Panc1 (cell line): ENCODE measurements at regions of chr1 and their contacts with region 1.

Region 1: GRCh38 chr1:45173632-45174031 is 32.8 kb downstream of the ZSWIM5 start:
- DNase-seq: no peak
- ATAC-seq: no peak
- H3K4me3 ChIP-seq: no peak overlapping the region
- H3K27ac ChIP-seq: no peak overlapping the region
- H3K4me1 ChIP-seq: peaks cover 14% of the 10 kb centered on the region
- H3K27me3 ChIP-seq: no peaks in the 10 kb centered on the region
- CTCF ChIP-seq: no peak

Region 2: GRCh38 chr1:45093334-45093733 is 80.3 kb before region 1 on chr1:
- CTCF ChIA-PET with region 1: no interaction called
- POLR2A ChIA-PET with region 1: no interaction called
- in situ Hi-C with region 1: no loop called
- intact Hi-C with region 1: no loop called
- DNase-seq: no peak
- ATAC-seq: no peak
- H3K4me3 ChIP-seq: no peak overlapping the region
- H3K27ac ChIP-seq: no peak overlapping the region
- H3K4me1 ChIP-seq: no peaks in the 10 kb centered on the region
- H3K27me3 ChIP-seq: no peaks in the 10 kb centered on the region
- CTCF ChIP-seq: no peak

Region 3: GRCh38 chr1:45216200-45216541 is 42.5 kb after region 1 on chr1:
- CTCF ChIA-PET with region 1: no interaction called
- POLR2A ChIA-PET with region 1: no interaction called
- in situ Hi-C with region 1: no loop called
- intact Hi-C with region 1: no loop called
- DNase-seq: no peak
- ATAC-seq: no peak
- H3K4me3 ChIP-seq: no peak overlapping the region
- H3K27ac ChIP-seq: no peak overlapping the region
- H3K4me1 ChIP-seq: no peaks in the 10 kb centered on the region
- H3K27me3 ChIP-seq: peaks cover 5% of the 10 kb centered on the region; the same call in 1 of the 2 replicates
- CTCF ChIP-seq: no peak

Region 4: GRCh38 chr1:45543581-45544417 is 370.2 kb after region 1 on chr1:
- CTCF ChIA-PET with region 1: no interaction called
- POLR2A ChIA-PET with region 1: interaction called, 15 read pairs
- in situ Hi-C with region 1: no loop called
- intact Hi-C with region 1: no loop called
- DNase-seq: no peak
- ATAC-seq: 0 out of 2 replicates have a peak, but pooled peaks have one; percentile 23
- H3K4me3 ChIP-seq: no peak overlapping the region
- H3K27ac ChIP-seq: no peak overlapping the region
- H3K4me1 ChIP-seq: no peaks in the 10 kb centered on the region
- H3K27me3 ChIP-seq: no peaks in the 10 kb centered on the region
- CTCF ChIP-seq: no peak